GM18951 (cell line): ENCODE measurements at regions of chr11 and their contacts with region 1.

Region 1: DNA sequence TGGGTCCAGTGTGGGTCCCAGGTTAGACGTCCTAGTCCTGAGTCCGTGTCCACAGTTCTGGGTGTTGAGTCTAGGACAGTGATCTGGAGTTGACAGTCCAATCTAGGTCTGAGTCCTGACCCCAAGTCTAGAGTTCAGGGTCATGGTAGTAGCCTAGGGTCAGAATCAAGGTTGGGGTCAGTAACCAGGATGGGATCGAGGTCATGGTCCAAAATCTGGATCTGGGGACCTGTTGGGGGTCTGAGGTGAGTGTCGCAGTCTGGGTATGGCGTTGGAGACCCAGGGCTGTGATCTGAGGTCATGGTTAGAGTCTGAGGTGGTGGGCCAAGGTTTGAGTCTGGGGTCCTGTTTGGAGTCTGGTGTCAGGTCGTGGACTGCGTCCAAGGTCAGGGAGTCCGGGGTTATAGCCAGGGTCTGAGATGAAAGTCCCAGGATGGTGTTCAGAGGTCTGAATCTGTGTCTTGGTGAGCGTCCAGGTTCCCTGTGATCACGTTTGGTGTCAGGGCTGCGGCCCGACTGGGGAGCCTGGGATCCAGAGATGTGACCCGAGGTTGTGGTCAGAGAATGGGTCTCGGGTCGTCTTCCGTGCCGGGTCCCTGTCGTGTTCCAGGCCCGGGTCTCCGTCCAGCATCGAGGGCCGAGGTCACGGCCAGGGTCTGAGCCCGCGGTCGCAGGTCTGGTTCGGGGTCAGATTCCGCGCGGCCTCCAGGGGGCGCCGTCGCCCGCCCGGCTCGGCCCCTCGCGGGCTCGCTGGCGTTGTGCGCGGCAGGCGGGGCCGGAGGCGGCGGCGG is 445 bp upstream of the GRK2 start:
- POLR2A ChIP-seq: no peak

Region 2: DNA sequence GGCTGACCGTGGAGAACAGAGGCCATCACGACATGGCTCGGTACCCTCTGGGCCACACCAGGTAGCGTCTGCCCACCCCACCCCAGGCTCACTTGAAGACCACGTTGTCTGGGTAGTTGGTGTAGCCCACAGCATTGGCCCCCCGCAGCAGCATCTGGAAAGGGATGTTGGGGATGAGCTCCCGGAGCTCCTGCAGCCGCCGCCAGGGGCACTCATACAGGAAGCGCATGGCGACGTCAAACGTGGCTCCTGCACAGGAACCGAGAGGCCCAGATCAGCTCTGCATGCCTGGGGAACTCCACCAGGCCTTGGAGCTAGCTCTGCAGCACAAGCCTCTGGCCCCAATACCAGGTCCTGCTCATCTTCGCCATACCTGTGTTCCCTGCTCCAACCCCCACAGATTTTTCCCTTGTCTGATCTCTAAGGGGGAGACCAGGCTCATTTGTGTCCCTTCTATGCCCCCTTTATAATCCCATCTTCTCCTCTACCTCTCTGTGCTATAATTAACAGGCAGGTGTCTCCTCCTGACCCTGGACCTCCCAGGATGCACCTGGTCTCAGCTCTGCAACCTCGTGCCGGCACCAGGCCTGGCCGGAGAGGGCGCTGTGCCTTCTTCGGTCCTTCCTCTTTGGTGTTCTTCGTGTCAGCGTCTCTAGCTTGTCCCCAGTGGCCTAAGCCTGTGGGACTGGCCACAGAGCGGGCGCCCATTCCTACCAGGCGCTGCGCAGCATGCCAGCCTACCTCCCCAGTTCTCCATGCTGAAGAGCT is 413.9 kb before region 1 on chr11:
- in situ Hi-C with region 1: no loop called
- POLR2A ChIP-seq: no peak

Region 3: GRCh38 chr11:67317205-67317887 is 51.5 kb after region 1 on chr11:
- in situ Hi-C with region 1: loop called (anchors 5 kb)
- POLR2A ChIP-seq: peak; percentile 69

Region 4: DNA sequence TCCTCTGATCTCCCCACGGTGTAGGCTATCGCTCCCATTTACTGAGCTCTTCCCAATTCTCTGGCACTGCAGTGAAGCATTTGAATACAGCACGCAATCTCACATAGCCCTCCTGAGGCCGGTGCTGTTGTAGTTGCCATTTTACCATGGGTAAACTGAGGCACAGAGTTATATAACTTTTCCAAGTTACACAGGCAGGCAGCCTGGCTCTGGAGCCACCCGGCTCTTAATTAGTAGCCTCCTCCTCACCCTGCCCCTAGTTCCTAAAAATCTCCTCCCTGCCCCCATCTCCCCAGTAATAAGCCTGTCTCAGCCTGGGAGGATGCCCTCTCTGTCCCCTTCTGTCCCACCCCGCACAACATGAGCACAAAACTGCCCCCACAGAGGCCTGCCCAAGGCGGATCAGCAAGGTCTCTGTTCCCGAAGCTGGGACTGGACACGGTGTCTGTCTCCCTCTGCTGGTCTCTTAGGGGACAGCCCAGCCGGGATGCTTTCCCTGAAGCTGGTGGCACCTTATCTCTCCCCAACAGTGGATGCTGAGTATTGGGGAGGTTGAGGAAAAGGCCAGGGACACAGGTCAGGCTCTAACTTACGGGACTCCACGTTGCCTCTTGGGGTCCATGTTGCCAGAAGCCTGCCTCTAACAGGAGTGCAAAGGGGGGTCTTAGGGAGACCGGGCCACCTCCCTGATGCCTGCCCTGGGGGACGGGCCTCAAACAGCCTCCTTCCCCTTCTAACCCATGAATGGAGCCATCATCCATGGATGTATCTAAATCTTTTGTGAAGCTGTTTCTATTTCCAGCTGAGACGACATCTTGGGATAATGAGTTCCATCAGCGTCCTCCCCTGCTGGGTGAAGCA is 116.7 kb after region 1 on chr11:
- in situ Hi-C with region 1: loop called (anchors 10 kb)
- POLR2A ChIP-seq: no peak